Activated CD8-positive, alpha-beta T cell treated with anti-CD3 and anti-CD28 coated beads, Interleukin-2, amount 10 ng/mL, durations not matched to agents 7 days and 5 days (primary cell): ENCODE measurements at regions of chr10 and their contacts with region 1.

Region 1: GRCh38 chr10:35119378-35119777 is 7.3 kb upstream of the CREM start:
- DNase-seq: no peak
- ATAC-seq: no peak
- H3K4me3 Mint-ChIP-seq: no peak overlapping the region
- H3K27ac Mint-ChIP-seq: no peak overlapping the region
- H3K4me1 Mint-ChIP-seq: peaks cover 4% of the 10 kb centered on the region
- H3K27me3 Mint-ChIP-seq: peaks cover 3% of the 10 kb centered on the region

Region 2: GRCh38 chr10:34994565-34995142 is 124.7 kb before region 1 on chr10:
- CTCF ChIA-PET with region 1: interaction called, 22 read pairs
- POLR2A ChIA-PET with region 1: no interaction called
- DNase-seq: peak; percentile 71
- ATAC-seq: peak; percentile 90
- H3K4me3 Mint-ChIP-seq: no peak overlapping the region
- H3K27ac Mint-ChIP-seq: no peak overlapping the region
- H3K4me1 Mint-ChIP-seq: peaks cover 18% of the 10 kb centered on the region
- H3K27me3 Mint-ChIP-seq: no peaks in the 10 kb centered on the region

Region 3: DNA sequence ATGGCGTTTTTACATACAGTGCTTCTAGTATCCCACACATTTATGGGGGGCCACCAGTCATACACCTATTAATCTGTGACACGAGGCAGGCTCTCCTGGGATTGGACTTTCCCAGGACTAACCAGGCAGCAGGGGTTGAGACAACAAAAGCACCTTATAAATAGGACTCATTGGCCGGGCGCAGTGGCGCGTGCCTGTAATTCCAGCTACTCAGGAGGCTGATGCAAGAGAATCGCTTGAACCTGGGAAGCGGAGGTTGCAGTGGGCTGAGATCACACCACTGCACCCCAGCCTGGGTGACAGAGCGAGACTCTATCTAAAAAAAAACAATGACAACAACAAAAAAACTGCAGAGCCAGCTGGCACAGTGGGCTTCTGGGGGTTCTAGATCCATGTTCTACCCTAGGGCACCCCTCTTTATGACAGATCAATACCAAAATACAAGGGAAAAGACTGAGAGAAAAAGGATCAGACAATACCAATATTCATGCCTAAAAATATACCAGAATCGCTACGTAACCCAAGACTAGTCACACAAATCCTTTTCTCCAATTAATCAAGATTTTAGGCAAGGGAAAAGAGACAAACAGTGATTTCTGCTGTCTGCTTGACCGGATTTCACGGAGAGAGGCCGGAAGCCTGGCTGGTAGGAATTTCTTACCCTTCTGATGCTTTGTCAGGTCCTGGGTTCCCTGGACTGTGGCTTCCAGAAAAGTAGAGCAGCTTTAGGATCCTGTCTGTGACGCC is 118.6 kb after region 1 on chr10:
- CTCF ChIA-PET with region 1: interaction called, 13 read pairs
- POLR2A ChIA-PET with region 1: no interaction called
- DNase-seq: no peak
- ATAC-seq: no peak
- H3K4me3 Mint-ChIP-seq: no peak overlapping the region
- H3K27ac Mint-ChIP-seq: no peak overlapping the region
- H3K4me1 Mint-ChIP-seq: no peaks in the 10 kb centered on the region
- H3K27me3 Mint-ChIP-seq: no peaks in the 10 kb centered on the region

Region 4: DNA sequence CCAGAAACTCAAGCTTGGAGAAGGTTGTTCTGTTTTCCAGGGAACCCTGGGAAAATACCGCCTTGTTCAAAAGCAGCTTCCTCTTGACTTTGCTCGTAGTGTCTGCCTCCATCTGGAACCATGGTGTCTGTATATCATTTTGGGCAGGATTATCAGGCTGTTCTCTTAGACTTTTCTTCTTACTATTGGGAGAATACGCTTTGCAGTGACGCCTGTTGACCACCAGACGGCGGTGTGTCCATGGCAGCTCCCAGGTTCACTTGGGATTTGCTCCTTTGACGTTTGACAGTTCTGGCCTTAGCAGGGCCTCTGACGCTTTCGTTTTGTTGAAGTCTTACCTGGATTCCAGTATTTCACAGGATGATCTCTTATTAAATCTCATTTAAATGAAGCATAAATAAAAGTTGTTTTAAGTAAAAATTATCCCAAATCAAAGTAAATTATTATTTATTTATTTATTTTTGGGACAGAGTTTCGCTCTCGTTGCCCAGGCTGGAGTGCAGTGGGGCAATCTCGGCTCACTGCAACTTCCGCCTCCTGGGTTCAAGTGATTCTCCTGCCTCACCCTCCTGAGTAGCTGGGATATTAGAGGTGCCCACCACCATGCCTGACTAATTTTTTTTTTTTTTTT is 444.0 kb after region 1 on chr10:
- CTCF ChIA-PET with region 1: interaction called, 18 read pairs
- POLR2A ChIA-PET with region 1: interaction called, 3 read pairs
- DNase-seq: peak; percentile 56
- ATAC-seq: peak; percentile 65
- H3K4me3 Mint-ChIP-seq: no peak overlapping the region
- H3K27ac Mint-ChIP-seq: no peak overlapping the region
- H3K4me1 Mint-ChIP-seq: peaks cover 14% of the 10 kb centered on the region
- H3K27me3 Mint-ChIP-seq: no peaks in the 10 kb centered on the region